ENCODE measurements at regions of chrX and their contacts with region 1.

Region 1: GRCh38 chrX:9327748-9328147 is 137.1 kb upstream of the TBL1X start:
- DNase-seq: no peak
- H3K4me3 ChIP-seq: no peak overlapping the region
- H3K27ac ChIP-seq: no peak overlapping the region
- H3K27me3 ChIP-seq: peaks cover 0 to 53% (median 5%) of the 10 kb centered on the region in 45 donors
- CTCF ChIP-seq: no peak

Region 2: GRCh38 chrX:9285342-9285771 is 42.4 kb before region 1 on chrX:
- intact Hi-C with region 1: no loop called
- DNase-seq: no peak
- H3K4me3 ChIP-seq: no peak overlapping the region
- H3K27ac ChIP-seq: no peak overlapping the region
- H3K27me3 ChIP-seq: peaks cover 0 to 58% (median 5%) of the 10 kb centered on the region in 45 donors
- CTCF ChIP-seq: no peak

Region 3: DNA sequence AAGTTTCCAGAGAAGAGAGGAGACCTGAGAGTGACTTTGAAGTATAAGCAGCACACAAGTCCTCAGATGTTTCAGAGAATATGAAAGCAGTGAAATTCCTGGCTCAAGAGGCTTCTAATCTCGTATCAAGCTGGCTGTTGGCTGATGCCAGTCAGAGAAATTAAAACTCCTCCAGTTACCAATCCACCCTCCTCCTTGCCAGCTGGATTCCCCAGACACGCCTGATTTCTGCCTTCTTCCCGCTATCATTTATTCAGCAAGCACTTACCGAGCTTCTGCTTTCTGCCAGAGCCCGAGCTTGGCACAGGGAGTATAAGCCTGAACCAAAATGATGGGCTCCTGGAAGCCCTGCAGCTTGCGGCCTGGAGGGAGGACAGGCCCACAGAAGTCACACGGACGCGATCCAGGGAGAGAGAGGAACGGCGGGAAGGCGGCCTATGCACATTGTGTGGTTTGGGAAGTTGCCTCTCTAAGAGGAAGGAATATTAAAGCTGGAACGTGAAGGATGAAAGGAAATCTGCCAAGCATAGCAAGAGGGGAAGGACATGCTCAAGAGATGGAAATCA is 34.7 kb after region 1 on chrX:
- intact Hi-C with region 1: loop called in 1 of 2 experiments (anchors 2 kb)
- DNase-seq: no peak
- H3K4me3 ChIP-seq: no peak overlapping the region
- H3K27ac ChIP-seq: no peak overlapping the region
- H3K27me3 ChIP-seq: peaks cover 0 to 49% (median 3%) of the 10 kb centered on the region in 45 donors
- CTCF ChIP-seq: no peak

Measured in dorsolateral prefrontal cortex (tissue), 120 donors.